Panc1 (cell line): ENCODE measurements at regions of chr17 and their contacts with region 1.

Region 1: DNA sequence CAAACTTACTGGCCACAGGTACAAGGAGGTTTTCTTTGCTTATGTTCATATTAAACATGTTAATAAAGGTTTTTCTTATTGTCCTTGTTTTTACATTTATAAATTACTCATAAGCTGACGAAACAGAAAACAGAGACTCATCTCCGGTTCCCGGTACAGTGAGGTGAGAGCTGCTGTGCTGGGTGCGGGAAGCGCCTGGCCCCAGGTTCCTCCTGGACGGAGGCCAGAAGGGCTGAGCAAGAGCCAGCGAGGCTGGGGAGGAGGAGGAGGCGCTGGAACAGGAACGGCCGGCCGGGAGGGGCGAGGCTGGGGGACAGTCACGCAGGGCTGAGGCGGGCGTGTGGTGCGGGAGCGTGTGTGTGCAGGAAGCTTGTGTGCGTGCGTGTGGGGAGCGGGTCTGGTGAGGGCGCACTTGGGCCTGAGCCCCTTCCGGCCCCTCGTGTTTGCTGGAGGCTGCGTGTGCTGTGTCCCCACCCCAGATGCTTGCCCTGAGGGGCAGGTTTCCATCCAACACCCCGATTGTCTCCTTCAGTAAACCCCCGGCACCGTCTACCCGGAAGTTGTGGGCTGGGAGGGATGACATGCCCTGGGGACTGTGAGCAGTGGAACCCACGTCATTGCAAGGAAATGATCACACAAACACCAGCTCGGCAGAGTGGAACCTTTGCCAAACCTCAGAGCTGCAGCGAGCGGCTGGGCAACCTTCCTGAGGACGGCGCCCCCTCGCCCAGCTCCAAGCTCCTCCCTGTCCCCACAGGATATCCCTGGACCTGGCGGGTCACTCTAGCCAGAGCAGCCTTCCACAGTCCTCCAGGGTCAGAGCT is 19.5 kb downstream of the CD7 start:
- DNase-seq: peak; percentile 71
- ATAC-seq: peak; percentile 72
- H3K4me3 ChIP-seq: peak overlapping the region; percentile 43 to 67
- H3K27ac ChIP-seq: peak overlapping the region; percentile 83
- H3K4me1 ChIP-seq: peaks cover 79% of the 10 kb centered on the region
- H3K27me3 ChIP-seq: no peaks in the 10 kb centered on the region
- CTCF ChIP-seq: no peak

Region 2: GRCh38 chr17:82212331-82213250 is 85.3 kb before region 1 on chr17 and contains the start of gene CCDC57:
- CTCF ChIA-PET with region 1: no interaction called
- POLR2A ChIA-PET with region 1: interaction called, 13 read pairs
- in situ Hi-C with region 1: no loop called
- intact Hi-C with region 1: no loop called
- DNase-seq: no peak
- ATAC-seq: peak; percentile 82
- H3K4me3 ChIP-seq: peak within 1 kb of the TSS; percentile 68 to 70
- H3K27ac ChIP-seq: peak within 1 kb of the TSS; percentile 92
- H3K4me1 ChIP-seq: peaks cover 42% of the 10 kb centered on the region
- H3K27me3 ChIP-seq: no peaks in the 10 kb centered on the region
- CTCF ChIP-seq: no peak
- total RNA-seq, gene CCDC57: 63.6 TPM

Region 3: GRCh38 chr17:82332669-82333278 is 34.8 kb after region 1 on chr17:
- CTCF ChIA-PET with region 1: no interaction called
- POLR2A ChIA-PET with region 1: no interaction called
- in situ Hi-C with region 1: no loop called
- intact Hi-C with region 1: loop called (anchors 5 kb)
- DNase-seq: no peak
- ATAC-seq: peak; percentile 42
- H3K4me3 ChIP-seq: peak overlapping the region; percentile 43 to 71
- H3K27ac ChIP-seq: peak overlapping the region; percentile 46; the same call in 1 of the 2 replicates
- H3K4me1 ChIP-seq: peaks cover 67% of the 10 kb centered on the region
- H3K27me3 ChIP-seq: no peaks in the 10 kb centered on the region
- CTCF ChIP-seq: no peak